ENCODE measurements at regions of chr6 and their contacts with region 1.

Region 1: DNA sequence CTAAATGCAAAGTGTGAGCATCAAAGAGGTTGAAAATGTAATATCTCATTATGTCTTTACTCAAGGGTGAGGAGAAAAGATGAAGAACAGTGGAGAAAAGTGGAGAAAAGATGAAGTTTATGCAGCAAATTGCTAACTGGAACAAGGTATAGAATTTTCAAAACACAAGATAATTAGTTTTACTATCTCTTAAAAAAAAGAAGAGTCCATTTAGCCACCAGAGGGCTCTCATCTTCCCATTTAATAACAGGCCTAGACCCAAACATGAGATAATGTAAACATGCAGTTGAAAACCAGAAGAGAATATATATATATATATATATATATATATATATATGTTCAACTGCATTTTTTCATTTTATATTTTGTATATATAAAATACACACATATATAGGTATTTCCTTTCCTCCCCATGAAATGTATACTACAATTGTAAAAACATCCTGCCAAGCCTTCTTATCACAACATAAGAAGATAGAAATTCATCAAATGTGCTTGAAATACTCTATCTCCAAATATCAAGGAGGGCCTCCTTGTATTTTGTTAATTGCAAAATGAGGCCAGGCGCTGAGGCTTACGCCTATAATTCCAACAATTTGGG is 78.4 kb downstream of the ADTRP start:
- DNase-seq: no peak
- H3K4me3 Mint-ChIP-seq: no peak overlapping the region
- H3K27ac Mint-ChIP-seq: peak overlapping the region; percentile 37
- H3K4me1 Mint-ChIP-seq: peaks cover 26% of the 10 kb centered on the region
- H3K27me3 Mint-ChIP-seq: no peaks in the 10 kb centered on the region

Region 2: DNA sequence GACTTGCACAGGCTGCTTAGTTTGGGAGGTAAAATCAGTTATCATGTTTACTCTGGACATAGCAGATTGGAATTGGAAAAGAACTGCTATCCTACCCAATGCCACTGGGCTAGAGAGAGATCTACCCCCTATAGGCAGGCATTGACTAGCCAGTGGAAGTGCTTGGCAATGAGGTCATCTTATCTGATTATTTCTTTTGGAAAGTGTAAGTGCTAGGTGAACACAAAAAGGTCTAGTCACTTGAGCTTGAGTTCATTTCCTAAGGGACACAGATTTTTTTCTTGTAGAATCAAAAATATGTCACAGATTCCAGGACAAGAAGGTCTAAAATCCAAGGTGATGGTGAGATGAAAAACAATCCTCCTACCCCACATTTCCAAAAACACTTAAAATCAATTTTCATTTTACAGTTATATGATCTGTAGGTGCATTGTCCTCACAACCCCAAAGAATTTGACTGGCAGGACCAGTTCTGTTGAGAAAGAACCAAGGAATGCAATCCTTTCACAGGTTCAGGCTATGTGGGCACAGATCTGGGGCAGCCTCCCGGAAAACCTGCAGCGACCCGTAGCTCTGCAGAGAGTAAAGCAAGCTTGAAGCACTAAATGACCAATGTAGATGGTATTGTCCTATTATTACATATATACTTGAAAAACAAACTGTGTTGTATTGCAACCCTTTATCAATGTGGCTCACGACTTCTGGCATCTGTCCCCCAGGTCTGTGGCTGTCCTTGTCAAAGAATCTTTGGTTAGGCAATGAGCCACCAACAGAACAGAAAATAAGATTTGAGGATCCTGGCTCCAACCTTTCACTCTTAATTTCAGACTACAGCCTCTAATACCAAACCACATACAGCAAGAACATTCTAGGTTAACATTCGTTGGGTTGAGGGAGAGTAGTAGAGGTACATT is 145.7 kb after region 1 on chr6:
- intact Hi-C with region 1: no loop called
- DNase-seq: no peak
- H3K4me3 Mint-ChIP-seq: no peak overlapping the region
- H3K27ac Mint-ChIP-seq: no peak overlapping the region
- H3K4me1 Mint-ChIP-seq: no peaks in the 10 kb centered on the region
- H3K27me3 Mint-ChIP-seq: no peaks in the 10 kb centered on the region

Region 3: DNA sequence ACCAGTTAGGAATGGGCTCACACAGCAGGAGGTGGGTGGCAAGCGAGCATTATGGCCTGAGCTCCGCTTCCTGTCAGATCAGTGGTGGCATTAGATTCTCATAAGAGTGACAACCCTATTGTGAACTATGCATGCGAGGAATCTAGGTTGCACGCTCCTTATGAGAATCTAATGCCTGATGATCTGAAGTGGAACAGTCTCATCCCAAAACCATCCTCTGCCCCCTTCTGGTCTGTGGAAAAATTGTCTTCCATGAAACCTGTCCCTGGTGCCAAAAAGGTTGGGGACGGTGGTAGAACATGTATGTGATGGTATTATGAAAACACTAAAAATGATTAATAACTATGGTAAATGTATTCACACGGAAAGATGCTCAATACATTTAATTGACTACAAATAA is 212.2 kb after region 1 on chr6:
- intact Hi-C with region 1: loop called (anchors 1 kb)
- DNase-seq: no peak
- H3K4me3 Mint-ChIP-seq: no peak overlapping the region
- H3K27ac Mint-ChIP-seq: no peak overlapping the region
- H3K4me1 Mint-ChIP-seq: peaks cover 14% of the 10 kb centered on the region
- H3K27me3 Mint-ChIP-seq: no peaks in the 10 kb centered on the region